ENCODE measurements at regions of chr1 and their contacts with region 1.

Region 1: DNA sequence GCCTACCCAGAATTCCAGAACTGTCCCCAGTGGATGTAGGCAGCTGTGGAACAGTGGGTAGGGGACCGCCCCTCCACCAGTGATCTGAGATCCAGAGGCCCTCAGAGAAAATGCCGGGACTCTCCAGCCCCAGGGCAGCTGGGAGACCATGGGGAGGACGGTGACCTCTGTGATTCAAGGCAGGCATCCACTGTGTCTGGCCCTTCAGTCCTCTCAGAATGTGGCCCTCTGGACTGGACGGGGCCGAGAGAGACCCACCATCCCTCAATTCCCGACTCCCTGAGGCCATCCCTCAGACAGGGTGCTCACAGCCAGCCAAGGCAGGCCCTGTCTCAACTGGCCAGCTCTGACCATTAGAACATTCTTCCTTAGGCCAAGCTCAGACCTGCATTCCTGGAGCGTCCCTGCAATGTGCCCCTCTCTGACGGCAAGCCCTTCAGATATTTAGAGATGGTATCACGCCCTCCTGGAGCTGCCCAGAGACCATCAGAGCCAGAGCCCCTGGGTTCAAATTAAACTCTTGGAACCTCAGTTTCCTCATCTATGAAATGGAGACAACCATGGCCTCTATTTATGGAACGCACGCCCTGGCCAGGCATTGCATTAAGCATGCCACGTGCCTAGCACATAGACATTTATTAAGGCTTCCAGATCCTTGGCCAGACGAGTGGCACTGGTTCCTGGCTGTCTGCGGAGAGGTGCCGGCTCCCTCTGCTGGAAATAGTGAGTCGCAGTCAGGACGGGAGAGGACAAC is 9.6 kb upstream of the EPS8L3 start:
- DNase-seq: peak; percentile 96
- H3K4me3 ChIP-seq: no peak overlapping the region
- H3K27ac ChIP-seq: no peak overlapping the region
- H3K4me1 ChIP-seq: 0 out of 2 replicates have a peak, but pooled peaks cover 9% of the 10 kb centered on the region
- H3K27me3 ChIP-seq: no peaks in the 10 kb centered on the region

Region 2: DNA sequence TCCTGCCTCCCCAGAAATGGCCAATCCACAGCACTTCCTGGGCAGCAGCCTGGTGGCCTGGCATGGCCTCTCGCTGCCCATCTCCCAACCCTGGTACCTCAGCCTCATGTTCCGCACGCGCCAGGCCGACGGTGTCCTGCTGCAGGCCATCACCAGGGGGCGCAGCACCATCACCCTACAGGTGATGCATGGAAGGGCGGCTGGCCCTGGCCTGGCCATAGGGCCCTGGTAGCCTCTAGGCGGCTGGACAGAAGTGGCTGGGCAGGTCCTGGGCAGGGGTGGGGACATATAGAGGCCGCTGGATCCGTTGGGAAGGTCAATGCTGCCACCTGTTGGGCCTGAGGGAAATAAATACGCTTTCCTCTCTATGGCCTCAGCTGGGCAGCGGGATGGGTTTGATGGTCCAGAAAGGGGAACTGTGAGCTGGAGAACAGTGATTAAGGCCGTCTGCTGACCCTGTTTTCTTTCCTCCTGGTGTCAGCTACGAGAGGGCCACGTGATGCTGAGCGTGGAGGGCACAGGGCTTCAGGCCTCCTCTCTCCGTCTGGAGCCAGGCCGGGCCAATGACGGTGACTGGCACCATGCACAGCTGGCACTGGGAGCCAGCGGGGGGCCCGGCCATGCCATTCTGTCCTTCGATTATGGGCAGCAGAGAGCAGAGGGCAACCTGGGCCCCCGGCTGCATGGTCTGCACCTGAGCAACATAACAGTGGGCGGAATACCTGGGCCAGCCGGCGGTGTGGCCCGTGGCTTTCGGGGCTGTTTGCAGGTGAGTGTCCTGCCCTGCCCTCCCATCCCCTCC is 509.5 kb before region 1 on chr1:
- in situ Hi-C with region 1: no loop called
- DNase-seq: peak; percentile 86
- H3K4me3 ChIP-seq: no peak overlapping the region
- H3K27ac ChIP-seq: no peak overlapping the region
- H3K4me1 ChIP-seq: no peaks in the 10 kb centered on the region
- H3K27me3 ChIP-seq: no peaks in the 10 kb centered on the region

Region 3: GRCh38 chr1:109603233-109603632 is 170.1 kb before region 1 on chr1:
- in situ Hi-C with region 1: no loop called
- DNase-seq: no peak
- H3K4me3 ChIP-seq: no peak overlapping the region
- H3K27ac ChIP-seq: no peak overlapping the region
- H3K4me1 ChIP-seq: peaks cover 4% of the 10 kb centered on the region
- H3K27me3 ChIP-seq: no peaks in the 10 kb centered on the region

Region 4: DNA sequence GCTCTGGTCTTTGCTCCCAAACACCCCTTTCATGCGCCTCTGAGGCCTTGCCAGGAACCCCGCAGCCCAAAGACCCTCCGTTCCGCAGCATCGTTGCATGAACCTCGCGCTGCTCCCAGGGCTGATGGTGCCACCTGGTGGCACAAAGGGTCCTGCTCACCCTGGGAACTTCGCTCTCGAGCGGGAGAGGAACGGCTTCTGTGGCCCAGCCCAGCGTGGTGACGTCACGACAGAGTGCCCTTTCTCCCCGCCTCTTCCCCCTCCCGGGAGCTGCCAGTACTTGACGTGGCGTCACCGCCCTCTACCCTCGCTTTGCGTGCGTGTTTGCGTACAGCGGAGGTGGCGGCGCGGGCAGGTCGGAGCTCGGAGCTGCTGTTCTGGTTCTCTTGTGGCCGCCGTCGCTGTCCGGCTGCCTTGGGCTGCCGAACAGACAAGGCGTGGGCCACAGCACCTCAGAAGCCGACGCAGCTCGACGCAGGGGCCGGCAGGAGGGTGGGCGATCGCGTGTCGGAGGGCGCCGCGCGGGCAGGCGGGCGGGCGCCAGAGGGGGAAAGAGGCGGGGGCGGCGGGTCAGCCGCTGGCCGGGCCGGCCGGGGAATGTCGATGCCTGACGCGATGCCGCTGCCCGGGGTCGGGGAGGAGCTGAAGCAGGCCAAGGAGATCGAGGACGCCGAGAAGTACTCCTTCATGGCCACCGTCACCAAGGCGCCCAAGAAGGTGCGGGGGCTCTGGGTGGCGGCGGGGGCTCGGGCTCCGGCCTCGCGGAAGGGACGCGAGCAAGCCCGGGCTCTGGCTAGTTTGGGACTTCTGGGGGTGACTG is 211.3 kb after region 1 on chr1 and contains the start of gene AHCYL1:
- in situ Hi-C with region 1: loop called (anchors 5 kb)
- DNase-seq: peak; percentile 100
- H3K4me3 ChIP-seq: peak within 1 kb of the TSS; percentile 99
- H3K27ac ChIP-seq: peak within 1 kb of the TSS; percentile 97
- H3K4me1 ChIP-seq: peaks cover 44% of the 10 kb centered on the region
- H3K27me3 ChIP-seq: no peaks in the 10 kb centered on the region
- total RNA-seq, gene AHCYL1: 47.6 and 49.3 TPM in 2 replicates

Measured in GM23248 (cell line).